ENCODE measurements at regions of chr1 and their contacts with region 1.

Region 1: DNA sequence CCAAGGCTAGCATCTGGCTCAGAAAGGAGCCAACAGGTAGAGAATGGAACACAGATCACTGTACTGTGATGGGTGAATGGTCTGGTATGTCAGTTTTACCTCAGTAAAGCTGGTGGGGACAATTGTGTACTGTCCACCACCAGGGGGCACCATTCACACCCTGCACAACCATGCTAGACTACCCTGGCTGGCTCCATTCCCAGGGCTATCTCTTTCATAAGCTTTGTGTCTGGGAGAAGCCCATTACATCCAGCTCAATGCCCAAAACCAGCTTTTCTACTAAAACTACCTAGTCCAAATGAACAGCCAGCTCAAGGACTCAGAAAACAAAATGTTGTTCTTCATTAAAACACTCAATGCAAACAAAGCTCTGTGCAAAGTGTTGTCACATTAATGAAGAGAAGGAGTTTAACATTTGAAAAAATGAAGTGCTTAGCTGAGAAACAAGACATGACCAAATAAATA is 62.0 kb upstream of the RASAL2 start:
- DNase-seq: peak; percentile 94
- ATAC-seq: peak; percentile 92 to 94

Region 2: DNA sequence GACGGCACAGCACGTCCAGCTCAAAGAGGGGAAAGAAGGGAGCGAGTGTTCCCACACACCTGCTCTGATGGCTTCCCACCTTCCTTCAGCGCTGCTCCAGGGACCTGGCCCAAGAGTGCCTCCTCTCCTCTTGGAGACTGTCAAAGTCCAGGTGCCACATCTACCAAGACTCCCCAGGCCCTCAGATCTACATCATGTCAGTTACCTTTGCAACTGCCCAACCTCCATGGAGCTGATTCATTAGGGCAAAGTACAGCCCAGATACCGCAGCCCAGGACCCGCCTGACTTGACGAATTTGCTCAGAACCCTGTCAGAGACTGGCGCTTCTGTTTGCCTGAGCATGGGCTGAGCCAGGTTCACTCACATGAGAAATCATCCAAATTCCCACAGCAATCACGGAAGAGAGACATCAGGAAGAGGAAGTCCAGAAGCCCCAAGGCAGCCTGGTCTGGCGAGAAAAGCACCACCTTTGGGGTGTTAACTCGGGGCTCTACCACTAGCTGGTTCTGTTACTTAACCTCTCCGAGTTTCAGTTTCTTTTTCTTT is 62.0 kb before region 1 on chr1 and contains the start of gene SEC16B:
- intact Hi-C with region 1: loop called in 1 of 2 experiments (anchors 5 kb)
- DNase-seq: no peak
- ATAC-seq: peak in 1 of 2 donors; percentile 19
- total RNA-seq, gene SEC16B: 2.1 to 2.2 TPM

Region 3: DNA sequence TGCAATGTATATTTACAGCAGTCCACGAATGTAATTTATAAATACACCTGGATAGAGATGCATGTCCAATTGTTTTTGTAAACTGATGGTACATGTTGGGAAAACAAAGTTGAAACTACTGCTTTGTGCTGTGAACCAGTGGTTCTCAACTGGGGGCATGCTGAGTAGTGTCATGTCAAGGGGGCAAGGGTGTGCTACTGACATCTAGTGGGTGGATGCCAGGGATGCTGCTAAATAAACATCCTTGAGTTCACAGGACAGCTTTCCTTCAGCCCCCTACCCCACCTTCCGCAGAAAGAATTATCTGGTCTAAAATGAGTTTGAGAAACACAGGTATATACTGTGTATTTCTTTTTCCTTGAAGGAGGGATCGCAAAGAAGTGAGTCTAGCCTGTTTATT is 157.9 kb after region 1 on chr1:
- intact Hi-C with region 1: loop called in 1 of 2 experiments (anchors 10 kb)
- DNase-seq: peak; percentile 31
- ATAC-seq: peak in 1 of 2 donors; percentile 63

Region 4: GRCh38 chr1:178282949-178283367 is 251.1 kb after region 1 on chr1:
- intact Hi-C with region 1: loop called in 1 of 2 experiments (anchors 10 kb)
- DNase-seq: no peak
- ATAC-seq: peak; percentile 27 to 36